ENCODE measurements at regions of chr6 and their contacts with region 1.

Region 1: GRCh38 chr6:87701676-87702588 is at the start of gene AKIRIN2:
- DNase-seq: peak; percentile 92 to 99 (median 96)
- ATAC-seq: peak; percentile 81
- H3K4me3 ChIP-seq: peak within 1 kb of the TSS; percentile 95
- H3K4me3 Mint-ChIP-seq: peak within 1 kb of the TSS; percentile 93
- H3K27ac ChIP-seq: peak within 1 kb of the TSS; percentile 87 to 90
- H3K27ac Mint-ChIP-seq: peak within 1 kb of the TSS; percentile 90
- H3K4me1 ChIP-seq: peaks cover 5% of the 10 kb centered on the region
- H3K4me1 Mint-ChIP-seq: peaks cover 46% of the 10 kb centered on the region
- H3K27me3 ChIP-seq: no peaks in the 10 kb centered on the region
- H3K27me3 Mint-ChIP-seq: no peaks in the 10 kb centered on the region
- CTCF ChIP-seq: no peak
- total RNA-seq, gene AKIRIN2: 91.0 to 92.5 TPM

Region 2: DNA sequence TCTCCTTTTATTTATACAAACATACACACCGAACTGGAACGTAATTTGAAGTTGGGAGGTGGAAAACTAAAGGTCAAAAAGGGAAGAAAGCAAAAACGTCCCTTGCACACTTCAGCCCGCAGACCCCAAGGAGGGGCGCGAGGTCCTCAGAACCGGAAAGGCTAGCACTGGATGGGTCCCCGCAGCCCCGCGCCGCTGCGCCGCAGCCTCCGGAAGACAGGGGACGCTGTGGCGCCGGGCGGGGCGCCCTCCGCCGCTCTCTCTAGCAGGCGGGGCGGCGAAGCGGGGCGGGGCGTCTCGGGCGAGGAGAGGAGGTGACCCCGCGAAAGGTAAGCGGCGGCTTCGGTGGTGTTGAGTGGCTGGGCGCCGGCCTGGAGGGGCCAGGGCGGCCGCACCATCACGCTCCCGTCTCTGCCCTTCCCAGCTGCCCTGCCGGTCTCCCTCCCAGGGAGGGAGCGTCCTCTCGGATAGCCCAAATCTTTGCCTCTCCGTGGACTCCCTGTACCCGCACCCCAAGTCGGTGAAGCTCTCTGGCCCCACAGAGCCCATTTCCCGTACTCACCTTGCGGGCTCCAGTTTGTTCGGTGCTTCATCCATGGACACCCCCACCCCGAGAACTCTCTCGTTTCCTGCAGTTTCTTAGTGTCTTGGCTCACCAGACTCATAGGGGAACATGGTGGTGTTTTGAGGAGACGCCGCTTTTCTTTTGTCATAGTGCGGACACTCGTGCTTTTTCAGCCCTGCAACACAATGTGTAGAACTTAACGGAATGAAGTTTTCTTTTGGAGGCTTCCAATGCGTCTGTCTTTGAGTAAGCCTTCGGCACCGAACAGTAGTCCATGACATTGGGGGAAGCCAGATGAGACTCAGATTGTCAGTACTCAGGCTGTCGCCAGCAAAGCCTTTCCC is 379.4 kb before region 1 on chr6 and contains the start of gene SMIM8:
- CTCF ChIA-PET with region 1: no interaction called
- POLR2A ChIA-PET with region 1: no interaction called
- intact Hi-C with region 1: loop called in 1 of 2 experiments (anchors 10 kb)
- DNase-seq: peak; percentile 75 to 89 (median 82)
- ATAC-seq: peak; percentile 98
- H3K4me3 ChIP-seq: peak within 1 kb of the TSS; percentile 73
- H3K4me3 Mint-ChIP-seq: peak within 1 kb of the TSS; percentile 92
- H3K27ac ChIP-seq: peak within 1 kb of the TSS; percentile 14 to 52
- H3K27ac Mint-ChIP-seq: peak within 1 kb of the TSS; percentile 67
- H3K4me1 ChIP-seq: peaks cover 9% of the 10 kb centered on the region
- H3K4me1 Mint-ChIP-seq: peaks cover 21% of the 10 kb centered on the region
- H3K27me3 ChIP-seq: no peaks in the 10 kb centered on the region
- H3K27me3 Mint-ChIP-seq: no peaks in the 10 kb centered on the region
- CTCF ChIP-seq: peak; percentile 97
- total RNA-seq, gene SMIM8: 5.4 TPM

Region 3: GRCh38 chr6:87391334-87391733 is 310.6 kb before region 1 on chr6:
- CTCF ChIA-PET with region 1: no interaction called
- POLR2A ChIA-PET with region 1: no interaction called
- intact Hi-C with region 1: no loop called
- DNase-seq: no peak
- ATAC-seq: no peak
- H3K4me3 ChIP-seq: no peak overlapping the region
- H3K4me3 Mint-ChIP-seq: no peak overlapping the region
- H3K27ac ChIP-seq: no peak overlapping the region
- H3K27ac Mint-ChIP-seq: no peak overlapping the region
- H3K4me1 ChIP-seq: no peaks in the 10 kb centered on the region
- H3K4me1 Mint-ChIP-seq: no peaks in the 10 kb centered on the region
- H3K27me3 ChIP-seq: no peaks in the 10 kb centered on the region
- H3K27me3 Mint-ChIP-seq: no peaks in the 10 kb centered on the region
- CTCF ChIP-seq: no peak

Region 4: GRCh38 chr6:87472525-87473418 is 229.2 kb before region 1 on chr6 and contains the start of gene SLC35A1:
- CTCF ChIA-PET with region 1: no interaction called
- POLR2A ChIA-PET with region 1: interaction called, 15 read pairs
- intact Hi-C with region 1: loop called (anchors 2 to 10 kb)
- DNase-seq: peak; percentile 74 to 90 (median 80)
- ATAC-seq: peak; percentile 89
- H3K4me3 ChIP-seq: peak within 1 kb of the TSS; percentile 92
- H3K4me3 Mint-ChIP-seq: peak within 1 kb of the TSS; percentile 92
- H3K27ac ChIP-seq: peak within 1 kb of the TSS; percentile 77 to 97
- H3K27ac Mint-ChIP-seq: peak within 1 kb of the TSS; percentile 93
- H3K4me1 ChIP-seq: peaks cover 13% of the 10 kb centered on the region
- H3K4me1 Mint-ChIP-seq: peaks cover 28% of the 10 kb centered on the region
- H3K27me3 ChIP-seq: no peaks in the 10 kb centered on the region
- H3K27me3 Mint-ChIP-seq: peaks cover 3% of the 10 kb centered on the region
- CTCF ChIP-seq: no peak
- total RNA-seq, gene SLC35A1: 3.8 to 4.9 TPM

Region 5: DNA sequence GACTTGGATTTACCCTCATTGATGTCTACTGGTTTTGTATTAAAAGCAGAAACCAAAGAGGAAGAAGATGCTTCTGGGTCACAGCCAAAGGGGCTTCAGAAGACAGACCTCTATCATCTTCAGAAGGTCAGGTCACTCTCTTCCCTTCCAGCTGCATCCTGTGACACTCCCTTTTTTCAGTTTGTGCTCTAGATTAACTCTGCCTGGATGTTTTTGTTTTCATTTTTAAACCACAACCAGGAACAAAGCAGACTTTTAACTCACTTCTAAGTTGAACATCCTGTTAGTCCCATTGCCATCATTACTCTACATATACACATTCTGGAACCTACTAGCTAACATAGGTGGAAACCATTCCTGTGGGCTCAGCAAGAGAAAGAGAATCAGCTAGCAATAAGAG is 45.1 kb before region 1 on chr6:
- CTCF ChIA-PET with region 1: no interaction called
- POLR2A ChIA-PET with region 1: interaction called, 10 read pairs
- intact Hi-C with region 1: no loop called
- DNase-seq: peak in 3 of 14 experiments; percentile 5 to 61 (median 38)
- ATAC-seq: no peak
- H3K4me3 ChIP-seq: no peak overlapping the region
- H3K4me3 Mint-ChIP-seq: no peak overlapping the region
- H3K27ac ChIP-seq: no peak overlapping the region
- H3K27ac Mint-ChIP-seq: peak overlapping the region; percentile 54
- H3K4me1 ChIP-seq: peaks cover 8% of the 10 kb centered on the region
- H3K4me1 Mint-ChIP-seq: peaks cover 37% of the 10 kb centered on the region
- H3K27me3 ChIP-seq: no peaks in the 10 kb centered on the region
- H3K27me3 Mint-ChIP-seq: no peaks in the 10 kb centered on the region
- CTCF ChIP-seq: no peak

Region 6: DNA sequence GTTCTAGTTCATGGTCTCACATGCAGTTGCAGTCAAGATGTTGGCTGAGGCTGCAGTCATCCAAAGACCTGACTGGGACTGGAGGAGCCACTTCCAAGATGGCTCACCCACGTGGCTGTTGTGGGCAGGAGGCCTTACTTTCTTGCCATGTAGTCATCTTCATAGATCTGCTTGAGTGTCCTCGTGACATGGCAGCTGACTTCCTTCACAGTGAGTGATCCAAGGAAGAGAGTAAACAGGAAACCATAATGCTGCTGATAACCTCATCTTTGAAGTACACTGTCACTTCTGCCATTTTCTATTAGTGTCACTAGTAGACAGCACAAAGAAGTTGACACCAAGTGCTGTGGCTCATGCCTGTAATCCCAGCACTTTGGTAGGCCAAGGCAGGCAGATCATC is 40.2 kb after region 1 on chr6:
- CTCF ChIA-PET with region 1: no interaction called
- POLR2A ChIA-PET with region 1: interaction called, 12 read pairs
- intact Hi-C with region 1: no loop called
- DNase-seq: peak; percentile 8 to 88 (median 34)
- ATAC-seq: peak; percentile 92
- H3K4me3 ChIP-seq: no peak overlapping the region
- H3K4me3 Mint-ChIP-seq: no peak overlapping the region
- H3K27ac ChIP-seq: no peak overlapping the region
- H3K27ac Mint-ChIP-seq: peak overlapping the region; percentile 90
- H3K4me1 ChIP-seq: peaks cover 17% of the 10 kb centered on the region
- H3K4me1 Mint-ChIP-seq: peaks cover 39% of the 10 kb centered on the region
- H3K27me3 ChIP-seq: no peaks in the 10 kb centered on the region
- H3K27me3 Mint-ChIP-seq: no peaks in the 10 kb centered on the region
- CTCF ChIP-seq: no peak

Region 7: DNA sequence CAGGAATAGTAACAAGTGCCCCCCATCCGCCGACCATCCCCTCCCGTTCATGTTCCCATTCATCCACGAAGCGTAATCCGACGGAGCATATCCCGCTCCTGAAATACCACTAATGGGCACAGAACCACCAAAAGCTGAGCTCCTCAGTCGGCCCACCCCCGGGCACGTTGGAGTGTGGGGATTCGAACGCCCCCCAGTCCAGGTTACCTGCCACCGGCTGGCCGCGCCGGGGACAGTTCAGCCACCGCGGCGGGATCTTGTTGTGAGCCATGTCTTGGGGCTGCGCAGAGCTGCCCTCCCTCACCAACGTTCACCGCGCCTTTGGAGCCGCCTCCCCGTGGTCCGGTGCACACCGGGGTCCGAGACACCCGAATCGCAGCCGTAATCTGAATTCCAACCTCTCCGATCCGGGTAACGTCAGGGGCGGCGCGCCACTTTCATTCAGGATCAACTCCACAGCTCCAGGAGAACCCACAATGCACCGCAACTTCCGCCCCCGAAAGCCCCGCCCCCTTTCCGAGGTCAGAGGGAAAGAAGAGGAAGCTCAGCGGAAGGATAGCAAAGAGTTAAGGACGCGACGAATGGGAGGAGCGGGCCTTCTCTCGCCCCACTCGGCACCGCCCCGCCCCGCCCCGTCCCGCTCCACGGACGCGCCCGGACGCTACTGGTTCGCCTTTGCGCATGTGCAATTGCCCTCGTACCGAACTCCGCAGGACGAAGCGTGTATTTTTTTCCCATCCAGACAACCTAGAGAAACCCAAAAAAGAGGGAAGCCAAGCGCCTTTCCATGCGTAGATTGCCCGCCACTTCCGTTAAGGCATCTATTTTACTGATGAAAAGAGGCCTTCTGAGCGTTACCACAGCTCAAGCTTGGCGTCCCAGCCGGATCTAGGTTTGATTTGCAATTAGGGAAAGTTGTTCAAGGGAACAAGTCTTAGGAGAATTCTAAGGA is 1261.5 kb after region 1 on chr6 and contains the start of gene RNGTT:
- CTCF ChIA-PET with region 1: no interaction called
- POLR2A ChIA-PET with region 1: interaction called, 5 read pairs
- intact Hi-C with region 1: loop called in 1 of 2 experiments (anchors 5 kb)
- DNase-seq: peak; percentile 94 to 99 (median 97)
- ATAC-seq: peak; percentile 98
- H3K4me3 ChIP-seq: peak within 1 kb of the TSS; percentile 88
- H3K4me3 Mint-ChIP-seq: peak within 1 kb of the TSS; percentile 96
- H3K27ac ChIP-seq: peak within 1 kb of the TSS; percentile 60 to 65
- H3K27ac Mint-ChIP-seq: peak within 1 kb of the TSS; percentile 82
- H3K4me1 ChIP-seq: peaks cover 15% of the 10 kb centered on the region
- H3K4me1 Mint-ChIP-seq: peaks cover 63% of the 10 kb centered on the region
- H3K27me3 ChIP-seq: no peaks in the 10 kb centered on the region
- H3K27me3 Mint-ChIP-seq: no peaks in the 10 kb centered on the region
- CTCF ChIP-seq: no peak
- total RNA-seq, gene RNGTT: 11.6 to 12.4 TPM